Activated T-helper 1 cell treated with anti-CD3 and anti-CD28 coated beads, Interleukin-12 subunit alpha, Interleukin-12 subunit beta, Interleukin-2, Interleukin-4 antibody, amounts not matched to agents 30 ng/mL and 10 ng/mL and 1 ng/mL, durations not matched to agents 14 hours and 24 hours and 36 hours (primary cell): ENCODE measurements at regions of chr3 and their contacts with region 1.

Region 1: GRCh38 chr3:72520690-72521308 is 327.4 kb downstream of the SHQ1 start:
- DNase-seq: peak; percentile 20
- H3K4me3 Mint-ChIP-seq: peak overlapping the region; percentile 16
- H3K27ac Mint-ChIP-seq: peak overlapping the region; percentile 88
- H3K4me1 Mint-ChIP-seq: peaks cover 56% of the 10 kb centered on the region
- H3K27me3 Mint-ChIP-seq: no peaks in the 10 kb centered on the region

Region 2: GRCh38 chr3:71875461-71875947 is 645.3 kb before region 1 on chr3:
- intact Hi-C with region 1: loop called (anchors 1 kb)
- DNase-seq: peak; percentile 67
- H3K4me3 Mint-ChIP-seq: no peak overlapping the region
- H3K27ac Mint-ChIP-seq: peak overlapping the region; percentile 59
- H3K4me1 Mint-ChIP-seq: peaks cover 38% of the 10 kb centered on the region
- H3K27me3 Mint-ChIP-seq: peaks cover 8% of the 10 kb centered on the region

Region 3: GRCh38 chr3:72339116-72340030 is 181.4 kb before region 1 on chr3:
- intact Hi-C with region 1: loop called (anchors 1 kb)
- DNase-seq: no peak
- H3K4me3 Mint-ChIP-seq: no peak overlapping the region
- H3K27ac Mint-ChIP-seq: no peak overlapping the region
- H3K4me1 Mint-ChIP-seq: peaks cover 32% of the 10 kb centered on the region
- H3K27me3 Mint-ChIP-seq: peaks cover under 1% of the 10 kb centered on the region

Region 4: DNA sequence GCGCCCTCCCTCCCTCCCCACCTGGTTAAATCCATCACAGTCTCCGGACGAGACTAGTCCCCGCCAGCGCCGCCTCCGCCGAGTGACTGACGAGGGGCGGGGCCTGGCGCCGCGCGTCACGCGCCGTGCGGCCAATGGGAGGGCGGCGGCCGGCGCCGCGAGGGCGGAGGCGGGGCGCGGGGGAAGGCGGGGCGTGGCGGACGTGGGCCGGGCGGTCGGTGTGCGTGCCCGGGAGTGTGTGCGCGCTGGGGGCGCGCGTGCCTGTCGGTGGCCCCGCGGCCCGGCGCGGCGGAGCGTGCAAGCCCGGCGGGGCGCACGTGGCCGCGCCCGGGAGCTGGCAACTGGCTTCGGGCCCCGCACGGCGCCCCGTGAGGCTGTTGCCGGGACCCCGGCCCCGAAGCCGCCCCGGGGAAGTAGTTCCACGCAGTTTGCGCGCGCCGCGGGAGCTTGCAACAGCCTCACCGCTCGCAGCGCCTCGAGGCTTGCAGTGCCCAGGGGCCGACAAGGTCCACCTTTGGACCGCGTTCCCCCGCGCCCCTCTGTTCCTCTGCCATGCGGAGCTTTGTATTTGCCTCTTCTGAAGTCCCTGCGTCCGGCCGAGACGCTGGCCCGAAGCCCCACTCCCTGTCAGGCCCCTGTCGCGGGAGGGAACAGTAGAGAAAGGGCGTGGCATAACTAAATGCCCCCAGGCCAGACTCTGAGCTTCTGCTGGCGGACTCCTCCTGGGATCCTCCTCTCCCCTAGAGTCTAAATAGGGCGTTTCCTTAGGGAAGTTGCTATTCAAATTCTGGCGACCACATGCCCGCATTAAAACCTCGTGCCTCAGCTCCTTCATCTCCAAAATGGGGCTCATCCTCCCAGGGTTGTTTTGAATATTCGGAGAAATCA is 73.5 kb before region 1 on chr3:
- intact Hi-C with region 1: loop called (anchors 1 kb)
- DNase-seq: peak; percentile 93
- H3K4me3 Mint-ChIP-seq: peak overlapping the region; percentile 71
- H3K27ac Mint-ChIP-seq: peak overlapping the region; percentile 80
- H3K4me1 Mint-ChIP-seq: peaks cover 50% of the 10 kb centered on the region
- H3K27me3 Mint-ChIP-seq: peaks cover 1% of the 10 kb centered on the region

Region 5: DNA sequence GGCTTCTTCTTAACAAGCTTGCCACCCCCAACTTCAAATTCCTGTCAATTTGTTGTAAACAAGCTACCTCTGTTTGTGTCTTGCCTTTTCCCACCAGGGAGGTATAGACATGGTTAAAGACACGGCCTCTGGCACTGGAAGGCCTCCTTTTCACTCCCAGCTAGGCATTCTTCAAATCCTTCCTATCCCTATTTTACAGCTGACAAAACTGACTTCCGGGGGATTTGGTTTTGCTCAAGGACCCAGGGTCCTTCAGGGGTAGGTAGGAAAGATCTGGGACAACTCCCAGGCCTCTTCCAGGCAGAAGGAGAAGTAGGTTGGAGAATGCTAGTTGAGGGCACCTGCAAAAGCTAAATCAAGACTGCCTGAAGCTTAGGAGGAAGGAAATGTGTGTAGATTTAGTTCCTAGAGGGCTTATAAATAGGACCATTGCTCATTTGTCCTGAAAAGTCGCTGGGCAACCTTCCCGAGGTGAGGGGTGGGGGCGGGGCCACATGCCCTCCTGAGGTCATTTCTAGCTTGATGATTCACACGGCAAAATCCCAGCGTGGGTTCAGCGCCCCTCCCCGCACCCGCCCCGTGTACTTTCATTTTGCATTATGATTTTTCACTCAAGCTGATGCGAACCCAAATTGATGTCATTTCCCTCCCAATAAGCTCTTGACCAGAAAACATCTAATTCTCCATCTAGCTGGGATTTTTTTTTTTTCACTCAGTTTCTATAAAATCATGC is 38.0 kb before region 1 on chr3:
- intact Hi-C with region 1: loop called (anchors 1 kb)
- DNase-seq: peak; percentile 47
- H3K4me3 Mint-ChIP-seq: peak overlapping the region; percentile 68
- H3K27ac Mint-ChIP-seq: peak overlapping the region; percentile 94
- H3K4me1 Mint-ChIP-seq: peaks cover 73% of the 10 kb centered on the region
- H3K27me3 Mint-ChIP-seq: no peaks in the 10 kb centered on the region

Region 6: DNA sequence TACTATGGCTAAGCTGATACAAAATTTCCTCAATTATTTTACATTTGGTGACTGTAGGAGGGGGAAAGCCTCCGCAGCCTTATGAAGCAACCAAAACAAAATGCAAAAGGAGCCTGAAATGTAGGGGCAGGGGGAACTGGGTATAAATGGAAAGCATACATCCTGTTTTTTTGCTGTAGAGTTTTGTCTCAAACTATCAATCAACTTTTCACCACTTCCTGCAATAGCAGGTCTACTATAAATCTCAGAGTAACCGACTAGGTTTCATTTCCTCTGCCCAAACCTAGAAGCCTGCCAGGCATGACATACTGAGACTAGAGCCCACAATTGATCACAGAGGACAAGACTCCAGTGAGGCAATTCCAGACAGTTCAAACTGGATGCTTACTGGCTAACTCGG is 236.1 kb after region 1 on chr3:
- intact Hi-C with region 1: loop called (anchors 1 kb)
- DNase-seq: peak; percentile 38
- H3K4me3 Mint-ChIP-seq: peak overlapping the region; percentile 34
- H3K27ac Mint-ChIP-seq: peak overlapping the region; percentile 64
- H3K4me1 Mint-ChIP-seq: peaks cover 50% of the 10 kb centered on the region
- H3K27me3 Mint-ChIP-seq: no peaks in the 10 kb centered on the region

Region 7: DNA sequence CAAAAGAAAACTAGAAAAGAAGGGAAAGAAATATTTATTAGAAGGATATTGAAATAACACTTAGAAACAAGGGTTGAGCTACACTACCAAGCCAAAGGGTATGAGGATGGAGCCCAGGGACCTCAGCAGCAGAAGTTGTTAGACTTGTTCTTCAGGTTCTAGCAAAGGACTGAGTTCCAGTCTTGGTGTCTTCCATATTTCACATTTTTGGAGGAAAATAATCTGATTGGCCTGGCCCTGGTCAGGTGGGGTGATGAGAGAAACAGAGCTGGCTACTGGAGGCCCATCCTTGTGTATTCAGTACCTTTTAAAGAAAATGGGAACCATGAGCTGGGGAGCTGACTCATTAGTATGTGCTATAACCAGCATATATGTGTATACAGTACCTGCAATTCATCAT is 504.0 kb after region 1 on chr3:
- intact Hi-C with region 1: no loop called
- DNase-seq: no peak
- H3K4me3 Mint-ChIP-seq: no peak overlapping the region
- H3K27ac Mint-ChIP-seq: no peak overlapping the region
- H3K4me1 Mint-ChIP-seq: peaks cover 44% of the 10 kb centered on the region
- H3K27me3 Mint-ChIP-seq: no peaks in the 10 kb centered on the region